Activated CD4-positive, alpha-beta T cell treated with anti-CD3 and anti-CD28 coated beads for 36 hours (primary cell): ENCODE measurements at regions of chr7 and their contacts with region 1.

Region 1: DNA sequence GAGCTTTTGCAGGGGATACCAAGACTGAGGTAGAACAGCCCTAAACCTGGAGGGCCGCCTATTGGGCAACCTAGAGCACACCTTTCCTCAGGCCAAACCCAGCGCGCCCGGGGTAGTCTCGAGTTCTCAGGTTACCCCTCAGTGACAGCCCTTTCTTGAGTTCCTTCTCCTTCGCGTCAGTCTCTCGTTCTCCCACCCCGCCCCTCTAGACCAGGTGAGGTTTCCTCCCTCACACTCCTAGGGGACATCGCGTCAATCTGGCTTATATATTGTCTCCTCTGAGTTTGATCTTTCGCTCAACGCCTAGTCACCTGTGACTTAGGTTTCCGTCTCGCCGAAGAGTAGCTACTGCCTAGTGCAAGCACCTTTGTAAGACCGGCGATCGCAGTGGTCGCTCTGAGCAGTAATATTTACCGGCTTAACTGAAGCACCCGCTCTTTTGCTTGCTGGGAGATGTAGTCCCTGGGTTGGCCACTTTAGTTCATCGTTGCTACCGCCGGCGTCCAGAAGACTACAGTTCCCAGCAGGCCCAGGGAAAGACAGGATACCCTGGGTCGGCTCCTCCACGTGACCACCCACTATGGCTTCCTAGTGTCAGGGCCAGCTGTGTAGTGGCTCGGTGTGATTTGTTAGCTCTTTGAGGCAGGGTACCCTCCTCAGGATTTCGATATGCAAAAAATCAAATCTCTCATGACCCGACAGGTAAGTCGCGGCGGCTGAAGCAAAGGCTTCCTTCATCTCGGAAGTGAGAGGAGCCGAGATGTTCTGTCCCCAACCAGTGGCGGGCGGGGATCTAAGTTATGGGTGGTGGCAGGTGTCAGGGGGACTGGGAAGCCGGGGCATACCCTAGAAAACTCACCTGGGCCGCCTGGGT is at the start of gene VPS50:
- DNase-seq: peak; percentile 96
- ATAC-seq: peak; percentile 99
- H3K4me3 Mint-ChIP-seq: peak within 1 kb of the TSS; percentile 85
- H3K27ac Mint-ChIP-seq: peak within 1 kb of the TSS; percentile 88
- H3K4me1 Mint-ChIP-seq: peaks cover 10% of the 10 kb centered on the region
- H3K27me3 Mint-ChIP-seq: no peaks in the 10 kb centered on the region
- total RNA-seq, gene VPS50: 12.8 to 14.7 TPM

Region 2: DNA sequence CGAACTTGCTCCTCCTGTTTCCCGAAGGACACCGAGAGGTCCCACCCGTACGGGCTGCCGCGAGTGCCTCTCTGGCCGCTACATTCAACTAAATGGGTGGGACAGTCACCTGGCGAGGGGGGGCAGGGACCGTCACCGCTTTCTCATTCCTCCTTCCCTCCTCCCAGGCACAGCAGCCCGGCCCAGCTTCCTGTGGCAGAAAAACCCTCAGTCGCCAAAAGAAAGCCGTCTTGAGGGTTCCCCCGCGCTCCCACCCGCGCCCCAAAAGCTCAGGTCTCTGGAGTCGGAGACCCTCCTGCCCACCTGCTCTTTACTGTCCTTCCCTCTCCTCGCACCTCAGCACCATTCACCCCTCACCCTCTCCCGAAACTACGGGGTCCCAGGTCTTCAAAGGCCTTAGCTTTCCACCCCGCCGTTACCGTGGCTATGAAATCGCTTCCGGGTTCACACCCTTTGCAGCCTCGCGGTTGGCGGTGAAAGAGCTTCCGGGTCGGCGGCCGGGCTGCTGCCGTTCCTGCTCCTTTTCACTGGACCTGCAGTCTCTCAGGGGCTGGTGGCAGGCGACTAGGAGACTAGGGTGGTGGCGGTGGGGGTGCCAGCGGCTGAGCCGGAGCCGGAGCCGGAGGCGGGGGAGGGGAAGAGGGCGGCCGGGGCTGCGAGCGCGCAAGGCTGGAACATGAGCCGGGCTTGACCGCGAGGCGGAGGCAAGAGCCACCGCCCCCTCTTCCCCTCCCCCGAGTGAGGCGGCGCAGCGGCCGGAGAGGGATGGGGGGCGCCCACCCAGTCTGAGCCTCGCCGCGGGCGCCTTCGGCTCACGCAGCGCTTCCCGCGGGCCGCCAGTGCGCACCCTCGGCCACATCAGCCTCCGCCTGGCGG is 986.3 kb before region 1 on chr7 and contains the starts of genes ANKIB1 and KRIT1:
- CTCF ChIA-PET with region 1: no interaction called
- POLR2A ChIA-PET with region 1: no interaction called
- intact Hi-C with region 1: loop called in 1 of 2 experiments (anchors 5 kb)
- DNase-seq: peak; percentile 93
- ATAC-seq: peak; percentile 81
- H3K4me3 Mint-ChIP-seq: peak within 1 kb of the TSS; percentile 97
- H3K27ac Mint-ChIP-seq: peak within 1 kb of the TSS; percentile 98
- H3K4me1 Mint-ChIP-seq: peaks cover 26% of the 10 kb centered on the region
- H3K27me3 Mint-ChIP-seq: no peaks in the 10 kb centered on the region
- total RNA-seq, gene ANKIB1: 37.0 to 55.1 TPM
- total RNA-seq, gene KRIT1: 37.7 to 45.5 TPM

Region 3: DNA sequence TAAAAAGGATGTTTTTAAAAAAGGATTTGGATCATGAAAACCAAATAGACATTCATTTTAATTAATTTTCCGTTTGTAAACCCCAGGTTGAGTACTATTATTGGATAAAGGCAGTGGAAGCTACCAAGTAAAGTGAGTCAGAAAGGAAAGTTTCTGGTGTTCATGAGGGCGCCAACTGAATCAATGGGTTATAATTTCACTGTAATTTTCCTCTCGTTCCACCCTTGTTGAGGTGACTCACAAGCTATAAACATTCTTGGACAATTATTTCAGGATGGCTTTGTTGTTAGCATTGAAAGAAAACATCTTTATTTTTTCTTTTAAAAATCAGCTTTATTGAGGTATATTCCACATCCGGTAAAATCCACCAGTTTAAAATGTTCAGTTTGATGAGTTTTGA is 636.8 kb before region 1 on chr7:
- CTCF ChIA-PET with region 1: no interaction called
- POLR2A ChIA-PET with region 1: no interaction called
- intact Hi-C with region 1: loop called (anchors 1 to 5 kb)
- DNase-seq: no peak
- ATAC-seq: no peak
- H3K4me3 Mint-ChIP-seq: no peak overlapping the region
- H3K27ac Mint-ChIP-seq: no peak overlapping the region
- H3K4me1 Mint-ChIP-seq: peaks cover 7% of the 10 kb centered on the region
- H3K27me3 Mint-ChIP-seq: peaks cover 3% of the 10 kb centered on the region

Region 4: DNA sequence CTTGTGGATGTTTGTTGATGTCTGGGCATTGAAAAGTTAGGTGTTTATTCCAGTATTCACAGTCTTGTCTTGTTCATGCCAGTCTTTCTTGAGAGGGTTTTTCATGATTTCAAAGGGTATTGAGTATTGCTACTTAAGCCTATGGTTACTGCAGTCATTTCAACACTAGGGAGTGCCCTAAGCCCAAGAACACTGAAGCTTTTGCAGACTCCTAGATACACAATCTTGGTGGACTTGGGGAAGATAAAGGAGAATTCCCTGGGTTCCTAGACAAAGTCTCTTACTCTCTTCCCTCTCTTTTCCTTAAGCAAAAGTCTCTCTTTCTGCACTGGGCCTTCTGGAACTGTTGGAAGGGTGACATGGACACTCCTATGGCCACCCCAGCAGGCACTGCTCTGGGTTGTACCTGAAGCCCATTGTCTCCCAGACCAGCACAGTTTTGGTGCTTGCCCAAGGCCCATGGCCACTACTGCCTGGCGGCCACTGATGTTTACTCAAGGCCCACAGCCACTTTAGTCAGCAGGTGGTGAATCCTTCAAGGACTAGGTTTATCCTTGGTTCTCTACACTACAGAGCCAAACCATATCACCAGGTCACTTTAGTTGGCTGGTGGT is 139.2 kb before region 1 on chr7:
- CTCF ChIA-PET with region 1: interaction called, 4 read pairs
- POLR2A ChIA-PET with region 1: no interaction called
- intact Hi-C with region 1: loop called (anchors 1 kb)
- DNase-seq: no peak
- ATAC-seq: peak; percentile 57
- H3K4me3 Mint-ChIP-seq: no peak overlapping the region
- H3K27ac Mint-ChIP-seq: no peak overlapping the region
- H3K4me1 Mint-ChIP-seq: no peaks in the 10 kb centered on the region
- H3K27me3 Mint-ChIP-seq: peaks cover 15% of the 10 kb centered on the region

Region 5: DNA sequence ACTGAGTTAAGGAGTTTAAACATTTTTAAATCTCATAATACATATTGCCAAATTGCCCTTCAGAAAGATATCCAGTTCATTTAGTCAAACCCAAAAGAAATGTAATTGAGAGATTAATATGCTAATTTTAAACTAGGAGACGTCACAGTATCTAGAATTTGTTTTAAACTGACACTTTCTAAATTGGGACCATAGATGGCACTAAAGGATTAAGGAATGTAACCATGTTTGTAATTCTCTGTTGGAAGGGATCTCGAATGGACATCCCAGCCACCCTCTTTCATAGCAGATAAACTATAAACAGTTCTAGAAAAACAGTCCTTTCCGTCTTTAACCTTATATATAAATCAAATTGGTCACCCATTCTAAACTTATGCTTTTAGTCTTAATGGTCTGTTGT is 53.8 kb before region 1 on chr7:
- CTCF ChIA-PET with region 1: interaction called, 5 read pairs
- POLR2A ChIA-PET with region 1: no interaction called
- intact Hi-C with region 1: loop called (anchors 1 to 2 kb)
- DNase-seq: no peak
- ATAC-seq: no peak
- H3K4me3 Mint-ChIP-seq: no peak overlapping the region
- H3K27ac Mint-ChIP-seq: no peak overlapping the region
- H3K4me1 Mint-ChIP-seq: no peaks in the 10 kb centered on the region
- H3K27me3 Mint-ChIP-seq: peaks cover 30% of the 10 kb centered on the region

Region 6: DNA sequence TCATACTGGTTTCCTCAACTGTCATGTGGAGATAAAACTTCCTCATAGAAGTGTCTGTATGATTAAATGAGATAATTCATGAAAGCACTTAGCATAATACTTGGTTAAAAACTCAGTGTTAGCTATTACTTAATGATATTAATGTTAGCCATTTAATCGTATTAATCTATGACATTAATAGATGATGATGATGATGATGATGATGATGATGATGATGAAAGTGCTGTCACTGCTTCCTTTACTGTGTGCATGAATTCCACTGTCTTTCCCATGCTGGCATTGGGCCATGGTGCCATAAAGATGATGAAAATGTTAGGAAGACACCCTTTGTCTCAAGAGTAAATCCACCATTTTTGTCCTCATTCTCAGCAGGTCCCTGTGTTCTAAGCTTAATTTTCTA is 75.9 kb after region 1 on chr7:
- CTCF ChIA-PET with region 1: no interaction called
- POLR2A ChIA-PET with region 1: no interaction called
- intact Hi-C with region 1: no loop called
- DNase-seq: no peak
- ATAC-seq: no peak
- H3K4me3 Mint-ChIP-seq: no peak overlapping the region
- H3K27ac Mint-ChIP-seq: no peak overlapping the region
- H3K4me1 Mint-ChIP-seq: no peaks in the 10 kb centered on the region
- H3K27me3 Mint-ChIP-seq: no peaks in the 10 kb centered on the region

Region 7: GRCh38 chr7:94004024-94004951 is 772.3 kb after region 1 on chr7 and contains the start of gene BET1:
- CTCF ChIA-PET with region 1: no interaction called
- POLR2A ChIA-PET with region 1: no interaction called
- intact Hi-C with region 1: loop called (anchors 1 kb)
- DNase-seq: peak; percentile 95
- ATAC-seq: peak; percentile 96
- H3K4me3 Mint-ChIP-seq: peak within 1 kb of the TSS; percentile 98
- H3K27ac Mint-ChIP-seq: peak within 1 kb of the TSS; percentile 97
- H3K4me1 Mint-ChIP-seq: peaks cover 36% of the 10 kb centered on the region
- H3K27me3 Mint-ChIP-seq: peaks cover 6% of the 10 kb centered on the region
- total RNA-seq, gene BET1: 16.9 to 19.8 TPM

Region 8: GRCh38 chr7:94657771-94658693 is 1426.0 kb after region 1 on chr7:
- CTCF ChIA-PET with region 1: no interaction called
- POLR2A ChIA-PET with region 1: no interaction called
- intact Hi-C with region 1: loop called in 1 of 2 experiments (anchors 1 kb)
- DNase-seq: peak; percentile 96
- ATAC-seq: peak; percentile 89
- H3K4me3 Mint-ChIP-seq: peak overlapping the region; percentile 67
- H3K27ac Mint-ChIP-seq: no peak overlapping the region
- H3K4me1 Mint-ChIP-seq: peaks cover 20% of the 10 kb centered on the region
- H3K27me3 Mint-ChIP-seq: peaks cover 20% of the 10 kb centered on the region